Panc1 (cell line): ENCODE measurements at regions of chr4 and their contacts with region 1.

Region 1: GRCh38 chr4:58477950-58478349 is 1367.8 kb upstream of the IGFBP7 start:
- DNase-seq: no peak
- ATAC-seq: no peak
- H3K4me3 ChIP-seq: no peak overlapping the region
- H3K27ac ChIP-seq: no peak overlapping the region
- H3K4me1 ChIP-seq: no peaks in the 10 kb centered on the region
- H3K27me3 ChIP-seq: no peaks in the 10 kb centered on the region
- CTCF ChIP-seq: no peak

Region 2: GRCh38 chr4:58435871-58436270 is 42.1 kb before region 1 on chr4:
- CTCF ChIA-PET with region 1: no interaction called
- POLR2A ChIA-PET with region 1: no interaction called
- in situ Hi-C with region 1: no loop called
- intact Hi-C with region 1: loop called (anchors 2 kb)
- DNase-seq: no peak
- ATAC-seq: no peak
- H3K4me3 ChIP-seq: no peak overlapping the region
- H3K27ac ChIP-seq: no peak overlapping the region
- H3K4me1 ChIP-seq: no peaks in the 10 kb centered on the region
- H3K27me3 ChIP-seq: no peaks in the 10 kb centered on the region
- CTCF ChIP-seq: no peak